GM23248 (cell line): ENCODE measurements at regions of chr3 and their contacts with region 1.

Region 1: DNA sequence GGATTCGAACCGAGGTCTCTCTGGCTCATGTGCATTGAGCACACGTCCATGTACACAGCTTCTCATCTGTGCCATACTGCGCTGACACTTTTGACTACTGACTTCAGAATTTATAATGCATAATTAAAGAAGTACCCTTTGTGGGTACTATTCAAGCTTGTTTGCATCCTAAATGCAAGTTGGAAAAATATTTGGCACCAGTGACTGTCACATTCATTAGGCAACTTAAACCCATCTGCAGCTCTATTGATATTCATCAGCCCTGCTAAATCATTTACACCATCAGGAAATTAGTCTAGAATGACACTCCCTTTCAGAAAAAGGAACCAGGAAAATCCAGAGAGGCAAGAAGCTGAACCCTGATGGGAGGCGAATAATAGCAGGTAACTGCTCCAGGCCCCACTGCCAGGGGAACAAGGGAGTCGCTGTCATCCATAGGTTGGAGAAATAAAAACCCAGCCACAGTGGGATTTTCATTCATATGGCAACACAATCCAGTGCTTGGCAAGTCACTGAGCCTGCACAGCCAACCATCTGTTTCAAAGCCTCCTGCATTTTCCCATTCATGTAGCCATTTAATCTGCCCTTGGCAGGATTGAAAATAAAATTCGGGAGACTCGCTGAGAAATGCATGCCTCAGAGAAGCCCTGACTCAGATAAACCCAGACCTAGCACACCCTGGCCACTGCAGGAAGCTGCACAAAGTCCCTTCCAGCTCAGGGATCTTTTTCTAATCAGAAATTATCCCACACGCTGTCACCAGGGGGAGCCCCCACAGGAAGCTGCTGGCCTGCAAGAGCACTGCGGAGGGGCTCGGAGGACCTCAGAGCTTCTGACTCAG is 103.0 kb upstream of the VEPH1 start:
- DNase-seq: peak; percentile 85
- H3K4me3 ChIP-seq: peak overlapping the region; percentile 33
- H3K27ac ChIP-seq: no peak overlapping the region
- H3K4me1 ChIP-seq: no peaks in the 10 kb centered on the region; the same call in 1 of the 2 replicates
- H3K27me3 ChIP-seq: no peaks in the 10 kb centered on the region

Region 2: GRCh38 chr3:157460253-157460652 is 146.0 kb before region 1 on chr3:
- in situ Hi-C with region 1: no loop called
- DNase-seq: peak; percentile 57
- H3K4me3 ChIP-seq: no peak overlapping the region
- H3K27ac ChIP-seq: peak overlapping the region; percentile 28
- H3K4me1 ChIP-seq: peaks cover 22% of the 10 kb centered on the region
- H3K27me3 ChIP-seq: no peaks in the 10 kb centered on the region

Region 3: GRCh38 chr3:158434412-158435038 is 828.3 kb after region 1 on chr3:
- in situ Hi-C with region 1: loop called (anchors 10 kb)
- DNase-seq: peak; percentile 78
- H3K4me3 ChIP-seq: no peak overlapping the region
- H3K27ac ChIP-seq: no peak overlapping the region
- H3K4me1 ChIP-seq: peaks cover 8% of the 10 kb centered on the region
- H3K27me3 ChIP-seq: no peaks in the 10 kb centered on the region